PC-9 (cell line): ENCODE measurements at regions of chr17 and their contacts with region 1.

Region 1: DNA sequence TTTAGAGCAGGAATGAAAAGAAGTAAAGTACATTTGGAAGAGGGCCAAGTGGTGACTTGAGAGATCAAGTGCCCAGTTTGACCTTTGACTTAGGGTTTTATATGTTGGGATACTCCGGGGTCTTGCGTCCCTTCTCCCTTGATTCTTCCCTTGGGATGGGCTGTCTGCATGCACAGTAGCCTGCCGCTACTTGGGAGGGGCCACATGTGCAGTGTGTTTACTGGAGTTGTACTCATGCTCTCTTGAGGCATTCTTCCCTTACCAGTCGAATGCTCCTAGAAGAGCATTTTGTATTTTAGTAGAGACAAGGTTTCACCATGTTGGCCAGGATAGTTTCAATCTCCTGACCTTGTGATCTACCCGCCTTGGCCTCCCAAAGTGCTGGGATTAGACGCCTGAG is 23.8 kb downstream of the GDPD1 start:
- DNase-seq: no peak
- H3K4me3 ChIP-seq: no peak overlapping the region
- H3K27ac ChIP-seq: no peak overlapping the region
- H3K4me1 ChIP-seq: no peaks in the 10 kb centered on the region
- H3K27me3 ChIP-seq: no peaks in the 10 kb centered on the region
- CTCF ChIP-seq: no peak

Region 2: GRCh38 chr17:59230764-59231163 is 13.3 kb before region 1 on chr17:
- CTCF ChIA-PET with region 1: no interaction called
- POLR2A ChIA-PET with region 1: interaction called, 14 read pairs
- intact Hi-C with region 1: no loop called
- DNase-seq: no peak
- H3K4me3 ChIP-seq: no peak overlapping the region
- H3K27ac ChIP-seq: no peak overlapping the region
- H3K4me1 ChIP-seq: no peaks in the 10 kb centered on the region
- H3K27me3 ChIP-seq: no peaks in the 10 kb centered on the region
- CTCF ChIP-seq: no peak